Left cardiac atrium (tissue), 4 donors: ENCODE measurements at regions of chr2 and their contacts with region 1.

Region 1: GRCh38 chr2:232854082-232854481 is 16.0 kb upstream of the SNORC start:
- DNase-seq: peak; percentile 65
- ATAC-seq: peak in 1 of 2 donors; percentile 42

Region 2: DNA sequence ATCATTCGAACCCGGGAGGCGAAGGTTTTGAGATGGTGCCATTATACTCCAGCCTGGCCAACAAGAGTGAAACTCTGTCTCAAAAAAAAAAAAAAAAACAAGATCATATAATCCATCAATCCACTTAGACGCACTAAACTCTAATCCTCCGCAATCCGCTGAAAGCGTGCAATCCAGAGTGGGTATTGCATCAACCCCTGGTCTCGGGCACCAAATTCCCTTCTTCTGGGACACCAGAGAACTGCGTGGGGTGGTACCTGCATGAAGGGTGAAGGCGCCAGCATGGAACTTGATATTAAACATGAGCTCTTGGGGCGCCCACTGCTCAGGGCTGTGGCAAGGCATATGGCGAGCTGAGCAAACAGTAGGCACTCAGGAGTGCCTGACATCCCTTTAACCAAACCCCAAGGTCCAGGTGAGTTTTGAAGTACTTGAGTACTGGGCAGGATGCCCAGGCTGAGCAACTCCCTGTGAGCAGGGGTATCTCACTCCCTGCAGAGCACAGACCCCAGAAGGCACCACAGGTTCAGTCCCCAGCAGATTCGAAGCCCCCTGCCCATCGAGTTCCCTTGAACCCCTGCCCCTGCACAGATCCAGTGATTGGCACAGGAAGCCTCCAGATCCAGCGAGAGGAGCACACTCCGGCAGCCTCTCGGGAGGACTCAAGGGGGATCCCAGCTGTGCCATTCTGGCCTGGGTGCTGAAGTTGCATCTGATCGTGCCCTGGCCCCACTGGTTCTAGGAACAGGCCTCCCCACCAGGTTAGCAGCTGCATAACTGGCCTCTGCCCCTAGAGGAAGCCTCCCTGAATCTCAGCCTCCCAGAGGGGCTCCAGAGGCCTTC is 390.2 kb before region 1 on chr2:
- intact Hi-C with region 1: no loop called
- DNase-seq: no peak
- ATAC-seq: no peak

Region 3: GRCh38 chr2:232910376-232910775 is 56.3 kb after region 1 on chr2:
- intact Hi-C with region 1: no loop called
- DNase-seq: no peak
- ATAC-seq: no peak

Region 4: DNA sequence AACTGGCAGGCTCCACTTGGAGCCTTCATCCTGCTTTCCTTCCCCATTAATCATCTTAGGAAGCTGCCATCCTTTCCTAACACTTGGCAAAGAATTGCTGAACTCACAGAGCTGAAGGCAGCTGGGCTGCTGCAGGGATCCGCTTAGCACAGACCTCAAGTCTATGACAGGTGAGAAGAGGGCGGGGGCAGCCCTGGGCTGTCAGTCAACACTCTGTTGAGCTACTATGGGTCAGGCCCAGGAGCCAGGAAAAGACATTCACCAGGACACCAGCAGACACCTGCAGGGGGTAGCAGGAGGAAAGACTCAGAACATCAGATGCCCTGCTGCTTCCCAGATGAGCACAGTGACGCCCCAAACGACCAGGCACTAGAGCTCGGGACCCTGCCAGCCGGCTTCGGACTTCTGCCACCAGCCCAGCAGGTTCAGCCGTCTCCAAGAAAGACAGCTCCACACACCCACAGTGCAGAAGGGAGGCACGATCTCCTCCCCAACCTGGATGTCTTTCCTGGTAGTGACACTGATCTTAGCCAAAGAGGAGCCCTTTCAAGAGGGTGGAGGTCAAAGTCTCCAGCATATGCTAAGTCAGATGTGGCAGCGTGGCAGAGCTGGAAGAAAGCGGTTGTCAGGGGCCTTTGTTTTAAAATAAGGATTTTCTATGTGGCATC is 71.2 kb after region 1 on chr2:
- intact Hi-C with region 1: no loop called
- DNase-seq: no peak
- ATAC-seq: peak in 1 of 2 donors; percentile 61

Region 5: DNA sequence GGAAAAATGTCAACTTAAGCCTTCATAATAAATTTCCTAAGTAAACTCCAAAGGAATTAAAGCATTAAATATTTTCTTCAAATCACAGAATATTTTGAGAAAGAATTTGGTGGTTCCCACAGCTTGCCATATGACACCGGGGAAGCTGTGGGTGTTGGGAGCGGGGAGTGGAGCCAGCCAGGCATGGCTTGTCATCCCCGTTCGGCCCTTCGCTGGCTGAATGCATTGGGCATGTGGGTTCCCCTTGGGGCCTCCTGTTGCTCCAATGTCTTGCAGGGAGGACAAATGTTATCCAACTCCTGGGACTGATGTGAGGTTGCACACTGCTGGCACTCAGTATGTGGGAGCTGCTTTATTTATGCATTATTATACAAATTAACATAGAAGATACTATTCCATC is 140.4 kb after region 1 on chr2:
- intact Hi-C with region 1: no loop called
- DNase-seq: no peak
- ATAC-seq: peak in 1 of 2 donors; percentile 27

Region 6: GRCh38 chr2:233053928-233054784 is 200.1 kb after region 1 on chr2:
- intact Hi-C with region 1: loop called in 1 of 2 experiments (anchors 10 kb)
- DNase-seq: peak; percentile 70
- ATAC-seq: peak; percentile 50 to 55

Region 7: GRCh38 chr2:233251306-233252116 is 397.4 kb after region 1 on chr2 and contains the start of gene ATG16L1:
- intact Hi-C with region 1: loop called (anchors 5 to 10 kb)
- DNase-seq: peak; percentile 97
- ATAC-seq: peak; percentile 99 to 100
- total RNA-seq, gene ATG16L1: 15.8 to 17.8 TPM